Gastrocnemius medialis (tissue), 4 donors: ENCODE measurements at regions of chr6 and their contacts with region 1.

Region 1: GRCh38 chr6:36765594-36766398 is 68.2 kb downstream of the RAB44 start:
- DNase-seq: peak; percentile 38 to 71
- ATAC-seq: peak; percentile 63 to 65
- H3K4me3 ChIP-seq: no peak overlapping the region
- H3K27ac ChIP-seq: no peak overlapping the region
- H3K4me1 ChIP-seq: peaks cover 11 to 22% of the 10 kb centered on the region in 2 donors
- H3K27me3 ChIP-seq: no peaks in the 10 kb centered on the region
- CTCF ChIP-seq: peak; percentile 79 to 91 (median 88)
- POLR2A ChIP-seq: no peak

Region 2: GRCh38 chr6:36280467-36280866 is 485.3 kb before region 1 on chr6:
- in situ Hi-C with region 1: no loop called
- intact Hi-C with region 1: no loop called
- DNase-seq: no peak
- ATAC-seq: no peak
- H3K4me3 ChIP-seq: no peak overlapping the region
- H3K27ac ChIP-seq: no peak overlapping the region
- H3K4me1 ChIP-seq: no peaks in the 10 kb centered on the region
- H3K27me3 ChIP-seq: peaks cover 7 to 22% (median 15%) of the 10 kb centered on the region in 3 donors
- CTCF ChIP-seq: no peak
- POLR2A ChIP-seq: no peak

Region 3: GRCh38 chr6:36326356-36326995 is 439.3 kb before region 1 on chr6:
- in situ Hi-C with region 1: no loop called
- intact Hi-C with region 1: no loop called
- DNase-seq: no peak
- ATAC-seq: no peak
- H3K4me3 ChIP-seq: no peak overlapping the region
- H3K27ac ChIP-seq: no peak overlapping the region
- H3K4me1 ChIP-seq: no peaks in the 10 kb centered on the region
- H3K27me3 ChIP-seq: peaks cover 0 to 5% (median 0%) of the 10 kb centered on the region in 3 donors
- CTCF ChIP-seq: no peak
- POLR2A ChIP-seq: no peak

Region 4: DNA sequence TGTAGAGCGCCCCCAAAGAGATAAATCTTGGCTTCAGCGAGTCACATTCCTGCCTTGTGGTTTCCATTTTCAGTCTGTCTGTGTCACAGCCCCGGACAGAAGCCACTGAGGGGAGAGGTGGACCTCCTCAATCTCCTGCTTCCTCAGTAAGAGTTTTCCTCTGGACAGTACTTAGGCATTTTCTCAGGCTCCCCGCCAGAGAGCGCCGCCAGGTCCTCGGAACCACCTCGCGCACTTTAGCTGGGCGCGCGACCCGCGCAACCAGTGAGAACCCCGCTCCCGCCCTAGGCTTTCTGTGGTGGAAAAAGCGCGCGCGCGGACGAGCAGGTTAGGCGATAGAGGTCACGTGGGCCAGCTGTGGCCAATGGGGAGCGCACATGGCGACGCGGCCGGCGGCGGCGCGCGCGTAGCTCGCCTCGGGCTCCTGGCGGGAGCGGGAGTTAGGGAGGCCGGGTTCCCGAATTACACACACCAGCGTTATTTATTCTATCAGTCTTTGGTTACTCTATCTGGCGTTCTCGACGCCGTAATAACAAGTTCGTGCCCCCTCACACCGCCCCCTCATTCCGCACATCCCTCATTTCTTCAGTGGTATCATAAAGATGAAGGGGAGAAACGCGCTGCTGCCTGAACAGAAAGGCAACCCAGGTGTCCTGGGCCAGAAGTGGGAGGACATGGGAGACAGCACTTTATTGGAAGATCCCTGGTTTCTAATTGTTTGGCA is 342.5 kb before region 1 on chr6:
- in situ Hi-C with region 1: no loop called
- intact Hi-C with region 1: loop called (anchors 10 kb)
- DNase-seq: peak; percentile 92 to 97
- ATAC-seq: peak; percentile 96 to 98
- H3K4me3 ChIP-seq: peak overlapping the region; percentile 55 to 66 (median 59)
- H3K27ac ChIP-seq: peak overlapping the region; percentile 78 to 82 (median 80)
- H3K4me1 ChIP-seq: peaks cover 6 to 7% of the 10 kb centered on the region in 2 donors
- H3K27me3 ChIP-seq: no peaks in the 10 kb centered on the region
- CTCF ChIP-seq: peak; percentile 26 to 67 (median 61)
- POLR2A ChIP-seq: peak; percentile 63 to 70

Region 5: DNA sequence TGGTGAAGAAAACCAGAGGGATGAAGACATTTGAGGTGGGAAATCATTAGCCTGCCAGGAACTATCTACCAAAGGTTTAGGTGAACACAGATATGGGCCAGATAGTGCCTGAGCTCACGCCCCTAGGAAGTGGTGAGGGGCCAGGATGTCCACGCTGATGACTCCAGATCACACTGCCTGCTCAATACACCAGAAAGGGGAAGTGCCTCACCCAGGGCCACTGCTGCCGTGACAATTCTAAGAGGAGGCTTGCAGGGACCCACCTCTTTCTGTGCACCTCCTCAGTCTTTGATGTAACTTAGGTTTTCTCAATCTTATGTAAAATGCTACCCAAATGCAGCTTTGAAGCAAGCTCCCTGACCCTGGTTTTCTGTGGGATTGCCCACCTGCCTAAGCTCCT is 73.6 kb before region 1 on chr6:
- in situ Hi-C with region 1: no loop called
- intact Hi-C with region 1: no loop called
- DNase-seq: no peak
- ATAC-seq: no peak
- H3K4me3 ChIP-seq: no peak overlapping the region
- H3K27ac ChIP-seq: no peak overlapping the region
- H3K4me1 ChIP-seq: peaks cover 0 to 8% of the 10 kb centered on the region in 2 donors
- H3K27me3 ChIP-seq: no peaks in the 10 kb centered on the region
- CTCF ChIP-seq: no peak
- POLR2A ChIP-seq: no peak

Region 6: DNA sequence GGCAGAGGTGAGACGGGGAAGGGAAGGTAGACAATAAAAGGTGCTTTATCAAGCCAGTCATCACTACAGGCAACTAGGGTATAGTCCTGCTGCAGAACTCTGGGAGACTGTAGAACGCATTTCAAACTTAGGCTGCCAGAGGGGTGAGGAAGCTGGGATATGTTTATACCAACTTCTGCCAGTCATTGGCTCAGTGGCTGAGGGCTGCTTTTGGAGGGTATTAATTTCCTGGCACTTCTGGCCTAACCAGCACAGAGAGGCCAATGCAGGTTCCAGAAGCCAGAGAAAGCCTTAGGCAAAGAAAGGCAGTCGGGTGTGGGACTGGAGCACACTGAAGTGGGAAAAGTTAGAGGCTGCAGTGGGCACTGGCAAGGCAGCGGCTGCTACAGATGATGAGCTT is 77.4 kb after region 1 on chr6:
- in situ Hi-C with region 1: loop called in 1 of 4 experiments (anchors 5 kb)
- intact Hi-C with region 1: loop called (anchors 2 kb)
- DNase-seq: no peak
- ATAC-seq: peak in 1 of 2 donors; percentile 69
- H3K4me3 ChIP-seq: no peak overlapping the region
- H3K27ac ChIP-seq: peak overlapping the region; percentile 30 to 69 (median 51)
- H3K4me1 ChIP-seq: peaks cover 43 to 53% of the 10 kb centered on the region in 2 donors
- H3K27me3 ChIP-seq: peaks cover 0 to 3% (median 0%) of the 10 kb centered on the region in 3 donors
- CTCF ChIP-seq: no peak
- POLR2A ChIP-seq: no peak

Region 7: GRCh38 chr6:36851149-36851614 is 85.4 kb after region 1 on chr6:
- in situ Hi-C with region 1: loop called (anchors 5 kb)
- intact Hi-C with region 1: loop called (anchors 1 kb)
- DNase-seq: peak in 1 of 2 donors; percentile 54
- ATAC-seq: peak; percentile 37 to 46
- H3K4me3 ChIP-seq: no peak overlapping the region
- H3K27ac ChIP-seq: no peak overlapping the region
- H3K4me1 ChIP-seq: peaks cover 29 to 34% of the 10 kb centered on the region in 2 donors
- H3K27me3 ChIP-seq: no peaks in the 10 kb centered on the region
- CTCF ChIP-seq: peak; percentile 69 to 79 (median 73)
- POLR2A ChIP-seq: no peak

Region 8: GRCh38 chr6:37018198-37019064 is 252.6 kb after region 1 on chr6:
- in situ Hi-C with region 1: loop called in 2 of 4 experiments (anchors 25 kb)
- intact Hi-C with region 1: loop called (anchors 5 kb)
- DNase-seq: peak; percentile 79 to 90
- ATAC-seq: peak; percentile 96 to 98
- H3K4me3 ChIP-seq: no peak overlapping the region
- H3K27ac ChIP-seq: peak overlapping the region; percentile 40 to 67 (median 56)
- H3K4me1 ChIP-seq: peaks cover 9 to 11% of the 10 kb centered on the region in 2 donors
- H3K27me3 ChIP-seq: no peaks in the 10 kb centered on the region
- CTCF ChIP-seq: peak; percentile 84 to 95 (median 91)
- POLR2A ChIP-seq: no peak

Region 9: DNA sequence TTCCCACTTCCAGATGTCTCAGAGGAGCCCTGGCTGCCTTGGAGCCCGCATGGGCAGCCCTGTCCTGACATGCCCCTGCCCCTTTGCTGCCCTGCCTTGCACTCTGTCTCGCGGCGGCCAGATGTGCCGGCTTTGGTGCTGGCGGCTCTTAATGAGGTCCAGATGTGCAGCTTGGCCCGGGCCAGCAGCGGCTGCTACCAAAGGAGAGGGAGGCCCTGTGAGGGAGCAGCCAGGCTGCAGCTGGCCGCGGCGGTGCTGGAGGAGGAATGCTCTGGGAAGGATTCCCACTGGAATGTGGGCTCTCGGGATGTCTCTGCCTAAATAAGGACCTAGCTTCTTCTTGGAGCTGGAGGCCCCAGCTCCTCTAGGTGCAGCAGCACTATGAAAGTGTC is 312.1 kb after region 1 on chr6:
- in situ Hi-C with region 1: no loop called
- intact Hi-C with region 1: no loop called
- DNase-seq: peak; percentile 36 to 67
- ATAC-seq: no peak
- H3K4me3 ChIP-seq: no peak overlapping the region
- H3K27ac ChIP-seq: no peak overlapping the region
- H3K4me1 ChIP-seq: peaks cover 5 to 19% of the 10 kb centered on the region in 2 donors
- H3K27me3 ChIP-seq: no peaks in the 10 kb centered on the region
- CTCF ChIP-seq: no peak
- POLR2A ChIP-seq: no peak